ENCODE measurements at regions of chr12 and their contacts with region 1.

Region 1: GRCh38 chr12:110836291-110836690 is 10.5 kb upstream of the CCDC63 start:
- DNase-seq: no peak
- H3K4me3 ChIP-seq: no peak overlapping the region
- H3K27ac ChIP-seq: no peak overlapping the region
- H3K4me1 ChIP-seq: no peaks in the 10 kb centered on the region
- H3K27me3 ChIP-seq: no peaks in the 10 kb centered on the region
- CTCF ChIP-seq: no peak

Region 2: GRCh38 chr12:110661337-110661972 is 174.8 kb before region 1 on chr12:
- CTCF ChIA-PET with region 1: no interaction called
- dilution Hi-C with region 1: no loop called
- in situ Hi-C with region 1: no loop called
- intact Hi-C with region 1: no loop called
- DNase-seq: no peak
- H3K4me3 ChIP-seq: no peak overlapping the region
- H3K27ac ChIP-seq: no peak overlapping the region
- H3K4me1 ChIP-seq: no peaks in the 10 kb centered on the region
- H3K27me3 ChIP-seq: no peaks in the 10 kb centered on the region
- CTCF ChIP-seq: no peak

Region 3: GRCh38 chr12:110704748-110705147 is 131.5 kb before region 1 on chr12:
- CTCF ChIA-PET with region 1: no interaction called
- dilution Hi-C with region 1: no loop called
- in situ Hi-C with region 1: loop called in 1 of 2 experiments (anchors 10 kb)
- intact Hi-C with region 1: no loop called
- DNase-seq: peak; percentile 24
- H3K4me3 ChIP-seq: no peak overlapping the region
- H3K27ac ChIP-seq: no peak overlapping the region
- H3K4me1 ChIP-seq: no peaks in the 10 kb centered on the region
- H3K27me3 ChIP-seq: no peaks in the 10 kb centered on the region
- CTCF ChIP-seq: peak; percentile 39 to 75